Astrocyte of the cerebellum (primary cell): ENCODE measurements at regions of chr10 and their contacts with region 1.

Region 1: GRCh38 chr10:132347211-132347930 is 15.4 kb downstream of the LRRC27 start:
- DNase-seq: no peak
- H3K4me3 ChIP-seq: no peak overlapping the region
- CTCF ChIP-seq: no peak

Region 2: GRCh38 chr10:132209130-132209529 is 138.2 kb before region 1 on chr10:
- in situ Hi-C with region 1: loop called (anchors 10 kb)
- DNase-seq: no peak
- H3K4me3 ChIP-seq: no peak overlapping the region
- CTCF ChIP-seq: no peak

Region 3: DNA sequence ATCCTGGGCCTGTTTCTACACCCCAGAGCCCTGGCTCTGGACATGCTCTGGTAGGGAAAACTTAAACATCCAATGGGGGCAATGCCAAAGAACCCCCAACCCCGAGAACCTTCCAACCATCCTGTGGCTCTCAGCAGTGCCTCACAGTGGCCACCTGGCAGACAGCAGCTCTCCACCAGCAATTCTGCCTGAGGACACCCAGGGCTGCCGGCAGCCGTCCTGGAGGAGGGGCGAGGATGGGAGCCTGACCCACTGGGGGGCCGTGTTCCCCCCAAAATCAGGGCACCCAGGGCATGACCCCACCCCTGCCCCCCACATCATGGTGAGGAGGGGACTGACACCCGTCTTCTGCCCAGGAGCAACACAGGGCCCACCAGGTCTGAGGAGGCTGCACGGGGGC is 127.9 kb before region 1 on chr10:
- in situ Hi-C with region 1: no loop called
- DNase-seq: no peak
- H3K4me3 ChIP-seq: no peak overlapping the region
- CTCF ChIP-seq: no peak